ENCODE measurements at regions of chr1 and their contacts with region 1.

Region 1: GRCh38 chr1:182143154-182143657 is 81.7 kb upstream of the ZNF648 start:
- DNase-seq: peak; percentile 94
- ATAC-seq: peak; percentile 86
- H3K4me3 ChIP-seq: no peak overlapping the region
- H3K27ac ChIP-seq: peak overlapping the region; percentile 95
- H3K4me1 ChIP-seq: peaks cover 44% of the 10 kb centered on the region
- H3K27me3 ChIP-seq: no peaks in the 10 kb centered on the region
- CTCF ChIP-seq: peak; percentile 98

Region 2: DNA sequence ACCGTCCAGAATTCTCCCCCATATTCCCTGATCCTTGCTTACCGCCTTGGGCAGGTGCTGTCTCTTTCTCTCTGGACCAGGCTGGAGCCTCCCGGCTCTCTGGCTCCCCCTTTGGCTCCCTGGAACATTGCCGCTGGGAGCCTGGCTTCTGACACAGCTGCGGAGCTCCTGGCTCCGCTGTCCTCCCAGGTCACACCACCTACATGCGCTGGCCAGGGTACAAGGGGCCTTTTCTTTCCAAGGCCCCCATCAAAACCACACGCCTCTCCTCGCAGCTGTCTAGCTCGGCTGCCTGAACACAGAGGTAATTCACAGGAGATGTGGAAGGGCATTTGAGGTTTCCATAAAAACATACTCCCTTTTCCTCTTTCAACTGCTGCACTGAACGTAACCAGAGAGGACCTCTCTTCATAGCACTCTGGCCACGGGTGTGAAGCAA is 74.2 kb before region 1 on chr1:
- intact Hi-C with region 1: no loop called
- DNase-seq: peak; percentile 82
- ATAC-seq: peak; percentile 93
- H3K4me3 ChIP-seq: no peak overlapping the region
- H3K27ac ChIP-seq: no peak overlapping the region
- H3K4me1 ChIP-seq: no peaks in the 10 kb centered on the region
- H3K27me3 ChIP-seq: peaks cover 8% of the 10 kb centered on the region
- CTCF ChIP-seq: peak; percentile 71

Region 3: GRCh38 chr1:182215764-182216163 is 72.6 kb after region 1 on chr1:
- intact Hi-C with region 1: no loop called
- DNase-seq: no peak
- ATAC-seq: no peak
- H3K4me3 ChIP-seq: no peak overlapping the region
- H3K27ac ChIP-seq: no peak overlapping the region
- H3K4me1 ChIP-seq: no peaks in the 10 kb centered on the region
- H3K27me3 ChIP-seq: no peaks in the 10 kb centered on the region
- CTCF ChIP-seq: no peak

Region 4: DNA sequence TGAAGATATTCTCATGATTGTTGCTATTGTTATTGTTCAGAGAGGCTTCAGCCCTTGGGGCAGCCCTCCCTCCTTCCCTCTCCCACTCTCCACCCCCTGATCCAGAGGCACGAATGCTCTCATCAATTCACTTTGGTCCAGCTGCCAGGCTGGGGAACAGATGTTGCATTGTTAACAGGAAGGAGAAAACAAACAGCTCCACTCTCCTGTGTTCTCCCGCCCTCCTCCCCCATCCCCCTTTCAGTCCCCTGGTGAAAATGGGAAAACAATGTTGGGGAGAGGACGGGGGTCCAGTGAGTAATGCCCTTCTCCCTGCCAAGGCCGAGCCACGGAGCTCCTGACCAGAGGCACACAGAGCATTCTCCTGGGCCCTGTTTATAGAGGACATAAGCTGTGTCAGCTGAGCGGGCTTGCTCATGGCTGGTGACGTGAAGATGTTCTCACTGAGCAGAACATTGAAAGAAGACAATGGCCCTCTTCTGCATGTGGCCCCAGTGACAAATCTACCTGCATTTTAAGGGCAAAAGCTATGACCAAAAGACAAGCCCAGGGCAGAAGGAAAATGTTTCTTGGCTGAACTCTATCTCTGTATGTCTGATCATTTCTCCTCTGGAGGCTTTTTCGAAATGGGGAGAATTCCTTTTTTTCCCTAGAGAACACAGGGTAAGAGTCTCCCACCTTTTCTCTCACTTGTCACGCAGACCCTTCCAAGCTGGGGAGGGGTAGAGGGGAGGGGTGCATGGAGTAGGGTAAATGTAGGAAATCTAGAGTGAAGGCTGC is 136.7 kb after region 1 on chr1:
- intact Hi-C with region 1: no loop called
- DNase-seq: no peak
- ATAC-seq: no peak
- H3K4me3 ChIP-seq: no peak overlapping the region
- H3K27ac ChIP-seq: no peak overlapping the region
- H3K4me1 ChIP-seq: no peaks in the 10 kb centered on the region
- H3K27me3 ChIP-seq: no peaks in the 10 kb centered on the region
- CTCF ChIP-seq: no peak

Region 5: DNA sequence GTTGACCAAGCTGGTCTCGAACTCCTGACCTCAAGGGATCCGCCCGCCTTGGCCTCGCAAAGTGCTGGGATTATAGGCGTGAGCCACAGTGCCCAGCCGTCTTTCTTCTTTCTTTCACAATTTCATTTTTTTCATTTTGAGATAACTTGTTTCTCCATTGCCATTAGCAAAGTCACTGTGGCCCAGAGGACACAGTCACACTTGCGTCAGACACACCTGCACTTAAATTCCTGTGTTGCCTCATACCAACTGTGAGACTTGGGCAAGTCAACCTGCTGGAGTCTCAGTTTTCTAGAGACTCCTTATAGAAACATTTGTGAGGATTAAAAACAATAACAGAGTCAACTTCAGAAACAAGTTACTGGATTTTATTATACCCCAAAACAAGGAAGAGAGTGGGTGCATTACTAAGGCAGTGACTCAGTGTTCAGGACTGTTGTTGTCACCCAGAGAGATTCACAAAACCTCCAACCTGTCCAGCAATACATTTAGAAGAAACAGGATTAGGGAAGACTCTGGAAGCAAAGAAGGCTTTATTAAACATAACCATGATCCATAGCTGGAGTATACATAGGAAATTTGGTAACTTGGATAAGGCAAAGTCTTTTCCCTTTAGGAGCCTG is 254.7 kb after region 1 on chr1:
- intact Hi-C with region 1: loop called (anchors 5 kb)
- DNase-seq: peak; percentile 68
- ATAC-seq: peak; percentile 67
- H3K4me3 ChIP-seq: no peak overlapping the region
- H3K27ac ChIP-seq: peak overlapping the region; percentile 20
- H3K4me1 ChIP-seq: peaks cover 19% of the 10 kb centered on the region
- H3K27me3 ChIP-seq: no peaks in the 10 kb centered on the region
- CTCF ChIP-seq: no peak